ENCODE measurements at regions of chr6 and their contacts with region 1.

Region 1: DNA sequence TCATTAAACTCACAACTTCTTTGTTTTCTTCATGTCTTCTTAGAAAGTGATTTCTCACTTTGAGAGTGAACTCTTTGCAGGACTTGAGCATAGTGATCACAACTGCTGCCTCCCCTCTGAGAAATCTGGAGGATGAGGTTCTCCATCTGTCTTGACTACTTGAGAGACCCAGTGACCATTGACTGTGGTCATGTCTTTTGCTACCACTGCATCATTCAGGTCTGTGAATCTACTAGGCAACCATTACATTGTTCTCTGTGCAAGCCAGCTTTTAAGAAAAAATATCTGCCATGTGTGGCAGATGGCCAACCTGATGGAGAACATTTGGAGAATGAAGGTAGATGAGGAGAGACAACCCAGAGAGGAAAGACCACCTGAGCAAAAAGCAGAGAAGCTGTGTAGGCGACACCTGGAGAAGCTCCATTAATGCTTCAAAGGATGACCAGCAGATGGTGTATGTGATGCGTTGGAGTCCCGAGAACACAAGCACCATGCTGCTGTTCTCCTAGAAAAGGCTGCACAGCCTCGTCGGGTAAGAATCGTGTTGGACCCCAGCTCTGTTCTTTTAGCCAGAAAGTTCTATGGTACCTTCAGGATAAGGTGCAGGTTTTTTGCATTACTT is 25.1 kb upstream of the TRIM26 start:
- DNase-seq: peak; percentile 40

Region 2: DNA sequence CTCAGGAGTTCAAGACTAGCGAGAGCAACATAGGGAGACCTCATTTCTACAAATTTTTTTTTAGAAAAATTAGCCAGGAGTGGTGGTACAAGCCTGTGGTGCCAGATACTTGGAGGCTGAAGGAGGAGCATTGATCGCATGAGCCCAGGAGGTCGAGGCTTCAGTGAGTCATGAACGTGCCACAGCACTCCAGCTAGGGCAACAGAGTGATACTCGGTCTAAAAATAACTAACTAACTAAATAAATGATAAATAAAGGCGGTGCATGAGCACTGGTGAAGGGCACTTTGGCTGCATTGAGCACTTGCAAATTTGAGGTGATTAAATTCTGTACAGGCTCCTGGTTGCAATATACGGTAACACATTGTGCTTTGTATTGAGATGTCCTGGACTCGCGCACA is 282.5 kb before region 1 on chr6:
- in situ Hi-C with region 1: no loop called
- DNase-seq: no peak

Region 3: GRCh38 chr6:30200551-30201281 is 37.6 kb before region 1 on chr6:
- in situ Hi-C with region 1: no loop called
- DNase-seq: no peak

Region 4: DNA sequence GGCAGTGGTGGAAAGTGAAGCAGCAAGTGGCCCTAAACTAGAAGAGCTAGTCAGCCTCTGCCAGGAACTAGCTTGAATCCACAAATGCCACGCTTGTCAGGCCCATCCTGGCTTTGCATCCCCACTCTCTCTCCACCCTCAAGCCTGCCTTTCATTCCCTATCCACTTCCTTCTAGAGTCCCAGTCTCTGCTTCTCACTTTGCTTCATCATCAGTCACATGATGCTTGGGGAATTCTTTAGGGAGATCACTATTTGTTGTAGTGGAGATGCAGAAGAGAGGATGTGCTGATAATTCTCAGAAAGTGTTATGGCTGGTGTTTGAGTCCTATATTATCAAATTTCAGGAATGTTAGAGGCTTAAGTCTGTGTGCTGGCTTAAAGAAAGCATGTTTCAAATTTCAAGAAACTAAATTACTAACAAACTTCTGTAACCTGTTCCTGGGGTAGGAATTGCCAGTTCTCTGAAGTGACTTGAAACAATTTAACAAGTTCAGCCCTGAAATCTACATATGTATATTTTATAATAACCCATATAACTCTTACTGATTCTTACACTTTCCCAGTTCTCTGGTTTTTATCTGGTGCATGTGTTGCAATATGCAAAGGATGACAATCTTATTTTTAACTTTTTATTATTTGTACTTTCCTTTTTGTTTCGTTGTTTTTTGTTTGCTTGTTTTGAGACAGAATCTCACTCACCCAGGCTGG is 95.9 kb after region 1 on chr6:
- in situ Hi-C with region 1: no loop called
- DNase-seq: no peak

Region 5: GRCh38 chr6:30357678-30358540 is 119.6 kb after region 1 on chr6:
- in situ Hi-C with region 1: loop called (anchors 25 kb)
- DNase-seq: peak; percentile 93

Region 6: GRCh38 chr6:30453508-30454116 is 215.3 kb after region 1 on chr6:
- in situ Hi-C with region 1: no loop called
- DNase-seq: peak; percentile 53

Measured in G401 (cell line).